B cell (primary cell): ENCODE measurements at regions of chr1 and their contacts with region 1.

Region 1: GRCh38 chr1:26102526-26102925 is 9.1 kb upstream of the PDIK1L start:
- DNase-seq: no peak
- ATAC-seq: no peak
- H3K4me3 ChIP-seq: no peak overlapping the region
- H3K4me3 Mint-ChIP-seq: no peak overlapping the region
- H3K27ac ChIP-seq: no peak overlapping the region
- H3K27ac Mint-ChIP-seq: no peak overlapping the region
- H3K4me1 ChIP-seq: no peaks in the 10 kb centered on the region
- H3K4me1 Mint-ChIP-seq: peaks cover 4% of the 10 kb centered on the region
- H3K27me3 ChIP-seq: no peaks in the 10 kb centered on the region
- H3K27me3 Mint-ChIP-seq: peaks cover 17% of the 10 kb centered on the region
- CTCF ChIP-seq: no peak

Region 2: DNA sequence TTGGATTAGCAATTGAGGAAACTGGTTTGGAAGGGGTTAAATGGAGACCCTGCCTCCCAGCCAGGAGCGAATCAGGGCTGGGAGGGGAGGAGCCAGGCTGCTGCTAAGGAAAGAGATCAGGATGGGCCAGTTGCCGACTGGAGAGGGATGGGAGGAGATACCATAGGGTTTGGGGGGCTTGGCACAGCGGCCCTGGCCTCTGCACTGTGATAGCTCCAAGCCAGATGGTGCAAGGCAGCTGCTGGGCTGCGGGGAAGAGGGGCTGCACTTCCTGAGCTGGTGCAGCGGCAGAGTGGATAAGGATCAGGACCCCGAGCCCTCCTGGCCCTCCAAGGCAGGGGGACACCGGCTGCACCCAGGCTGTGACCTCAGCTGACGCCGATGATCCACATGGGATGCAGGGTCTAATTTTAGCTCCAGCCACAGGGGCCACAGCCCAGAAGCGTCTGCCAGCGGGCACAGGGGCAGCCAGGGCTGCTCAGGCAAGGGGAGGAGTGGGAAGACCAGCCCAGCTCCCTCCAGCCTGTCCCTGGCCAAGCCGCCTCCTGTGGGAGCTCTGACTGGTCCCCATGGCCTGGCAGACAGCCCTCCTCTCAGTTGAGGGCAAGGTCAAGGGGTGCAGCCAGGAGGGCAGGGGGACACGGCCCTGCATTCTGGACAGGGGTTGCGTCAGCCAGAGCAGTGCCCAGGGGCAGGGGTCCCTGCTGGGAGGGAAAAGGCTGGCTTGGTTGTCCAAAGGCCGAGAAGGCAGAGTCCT is 80.7 kb before region 1 on chr1 and contains the start of gene EXTL1:
- CTCF ChIA-PET with region 1: no interaction called
- POLR2A ChIA-PET with region 1: no interaction called
- intact Hi-C with region 1: no loop called
- DNase-seq: no peak
- ATAC-seq: no peak
- H3K4me3 ChIP-seq: no peak within 1 kb of the TSS
- H3K4me3 Mint-ChIP-seq: no peak within 1 kb of the TSS
- H3K27ac ChIP-seq: no peak within 1 kb of the TSS
- H3K27ac Mint-ChIP-seq: no peak within 1 kb of the TSS
- H3K4me1 ChIP-seq: no peaks in the 10 kb centered on the region
- H3K4me1 Mint-ChIP-seq: no peaks in the 10 kb centered on the region
- H3K27me3 ChIP-seq: peaks cover 0 to 3% (median 0%) of the 10 kb centered on the region in 4 experiments
- H3K27me3 Mint-ChIP-seq: peaks cover 8% of the 10 kb centered on the region
- CTCF ChIP-seq: no peak
- total RNA-seq, gene EXTL1: 0.12 TPM in 2 replicates

Region 3: DNA sequence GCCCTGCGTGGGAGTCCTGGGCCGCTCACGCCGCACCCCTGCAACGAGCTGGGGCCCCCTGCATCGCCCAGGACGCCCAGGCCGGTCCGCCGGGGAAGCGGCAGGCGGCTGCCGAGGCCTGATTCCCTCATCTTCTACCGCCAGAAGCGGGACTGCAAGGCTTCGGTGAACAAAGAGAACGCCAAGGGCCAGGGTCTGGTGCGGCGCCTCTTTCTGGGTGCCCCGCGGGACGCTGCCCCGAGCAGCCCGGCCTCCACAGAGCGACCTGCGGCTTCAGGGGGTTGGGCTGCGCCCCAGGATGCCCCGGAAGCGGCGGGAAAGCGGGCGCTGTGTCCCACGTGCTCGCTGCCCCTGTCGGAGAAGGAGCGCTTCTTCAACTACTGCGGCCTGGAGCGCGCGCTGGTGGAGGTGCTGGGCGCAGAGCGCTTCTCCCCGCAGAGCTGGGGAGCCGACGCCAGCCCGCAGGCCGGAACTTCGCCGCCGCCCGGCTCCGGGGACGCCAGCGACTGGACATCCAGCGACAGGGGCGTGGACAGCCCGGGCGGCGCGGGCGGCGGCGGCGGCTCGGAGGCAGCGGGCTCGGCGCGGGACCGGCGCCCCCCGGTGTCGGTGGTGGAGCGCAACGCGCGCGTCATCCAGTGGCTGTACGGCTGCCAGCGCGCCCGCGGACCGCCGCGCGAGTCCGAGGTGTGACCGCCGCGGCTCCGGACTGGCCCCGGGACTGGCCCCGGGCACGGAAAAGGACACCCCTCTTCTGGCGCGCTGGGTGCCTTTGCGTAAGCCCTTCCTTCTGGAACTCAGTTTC is 59.1 kb after region 1 on chr1:
- CTCF ChIA-PET with region 1: interaction called, 8 read pairs
- POLR2A ChIA-PET with region 1: no interaction called
- intact Hi-C with region 1: loop called (anchors 1 kb)
- DNase-seq: peak; percentile 69
- ATAC-seq: peak; percentile 45
- H3K4me3 ChIP-seq: peak overlapping the region in 3 of 5 experiments; percentile 33 to 47 (median 39)
- H3K4me3 Mint-ChIP-seq: peak overlapping the region; percentile 75
- H3K27ac ChIP-seq: no peak overlapping the region
- H3K27ac Mint-ChIP-seq: no peak overlapping the region
- H3K4me1 ChIP-seq: peaks cover 25% of the 10 kb centered on the region in 2 donors
- H3K4me1 Mint-ChIP-seq: peaks cover 13% of the 10 kb centered on the region
- H3K27me3 ChIP-seq: peaks cover 0 to 64% (median 23%) of the 10 kb centered on the region in 4 experiments
- H3K27me3 Mint-ChIP-seq: peaks cover 27% of the 10 kb centered on the region
- CTCF ChIP-seq: no peak

Region 4: DNA sequence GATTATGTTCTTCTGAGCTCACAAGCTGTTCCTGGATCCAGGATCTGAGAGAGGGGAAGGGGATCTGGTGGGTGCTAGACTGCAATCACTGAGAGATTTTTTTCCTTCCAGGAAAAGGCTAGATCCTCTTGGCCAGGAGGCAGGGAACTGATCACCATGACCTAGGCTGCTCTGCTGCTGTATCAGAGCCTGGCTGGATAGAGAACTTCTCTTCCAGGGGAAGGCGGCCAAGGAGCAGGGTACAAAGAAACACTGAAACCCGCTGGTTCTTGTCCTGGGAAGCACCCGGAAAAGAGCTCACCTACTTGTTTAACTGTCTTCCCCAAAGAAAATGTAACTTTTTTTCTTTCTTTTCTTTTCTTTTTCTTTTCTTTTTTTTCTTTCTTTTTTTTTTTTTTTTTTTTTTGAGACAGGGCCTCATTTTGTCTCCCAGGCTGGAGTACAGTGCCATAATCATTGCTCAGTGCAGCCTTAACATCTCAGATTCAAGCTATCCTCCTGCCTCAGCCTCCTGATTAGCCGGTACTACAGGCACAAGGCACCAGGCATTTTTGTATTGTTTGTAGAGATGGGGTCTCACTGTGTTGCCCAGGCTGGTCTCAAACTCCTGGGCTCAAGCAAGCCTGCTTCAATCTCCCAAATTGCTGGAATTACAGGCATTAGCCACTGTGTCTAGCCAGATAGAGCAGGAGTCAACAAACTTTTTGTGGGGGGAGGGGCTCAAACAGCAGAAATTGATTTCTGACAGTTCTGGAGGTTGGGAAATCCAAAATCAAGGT is 414.6 kb after region 1 on chr1:
- CTCF ChIA-PET with region 1: no interaction called
- POLR2A ChIA-PET with region 1: no interaction called
- intact Hi-C with region 1: no loop called
- DNase-seq: no peak
- ATAC-seq: no peak
- H3K4me3 ChIP-seq: no peak overlapping the region
- H3K4me3 Mint-ChIP-seq: no peak overlapping the region
- H3K27ac ChIP-seq: no peak overlapping the region
- H3K27ac Mint-ChIP-seq: no peak overlapping the region
- H3K4me1 ChIP-seq: no peaks in the 10 kb centered on the region
- H3K4me1 Mint-ChIP-seq: no peaks in the 10 kb centered on the region
- H3K27me3 ChIP-seq: no peaks in the 10 kb centered on the region
- H3K27me3 Mint-ChIP-seq: peaks cover 6% of the 10 kb centered on the region
- CTCF ChIP-seq: no peak